ENCODE measurements at regions of chr13 and their contacts with region 1.

Region 1: GRCh38 chr13:91158017-91158395 is 189.5 kb upstream of the MIR17HG start:
- DNase-seq: no peak
- H3K4me3 ChIP-seq: no peak overlapping the region
- CTCF ChIP-seq: peak; percentile 11

Region 2: GRCh38 chr13:91133941-91134802 is 23.8 kb before region 1 on chr13:
- CTCF ChIA-PET with region 1: interaction called, 25 read pairs
- POLR2A ChIA-PET with region 1: no interaction called
- DNase-seq: no peak
- H3K4me3 ChIP-seq: no peak overlapping the region
- CTCF ChIP-seq: peak; percentile 61

Measured in AG04449 (cell line).